ENCODE measurements at regions of chr7 and their contacts with region 1.

Region 1: DNA sequence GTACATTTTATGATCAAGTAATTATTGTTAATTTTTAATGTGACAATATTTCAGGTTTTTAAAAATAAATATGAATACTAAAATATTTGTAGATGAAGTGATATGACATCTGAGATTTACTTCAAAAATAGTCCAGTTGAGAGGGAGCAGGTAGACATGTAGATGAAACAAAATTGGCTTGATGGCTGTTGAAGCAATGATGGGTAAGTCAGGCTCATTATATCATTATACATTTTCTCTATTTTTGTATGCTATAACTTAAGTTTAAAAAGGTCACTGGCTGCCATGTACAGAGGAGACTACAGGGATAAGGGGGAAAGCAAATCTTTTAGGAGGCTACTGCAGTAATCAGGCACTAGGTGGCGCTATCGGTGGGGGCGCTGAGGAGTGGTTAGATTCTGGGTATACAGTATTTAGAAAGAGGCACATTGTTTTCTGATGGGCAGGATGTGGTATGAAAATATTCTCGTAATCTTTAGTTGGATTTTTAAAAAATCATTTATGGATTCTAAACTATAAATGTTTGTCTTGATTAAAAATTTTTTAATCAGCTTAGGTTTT is 189.8 kb upstream of the IMMP2L start:
- DNase-seq: peak; percentile 75
- H3K4me3 ChIP-seq: no peak overlapping the region
- H3K27ac ChIP-seq: no peak overlapping the region
- H3K4me1 ChIP-seq: peaks cover 10% of the 10 kb centered on the region
- H3K27me3 ChIP-seq: no peaks in the 10 kb centered on the region
- CTCF ChIP-seq: peak; percentile 94

Region 2: DNA sequence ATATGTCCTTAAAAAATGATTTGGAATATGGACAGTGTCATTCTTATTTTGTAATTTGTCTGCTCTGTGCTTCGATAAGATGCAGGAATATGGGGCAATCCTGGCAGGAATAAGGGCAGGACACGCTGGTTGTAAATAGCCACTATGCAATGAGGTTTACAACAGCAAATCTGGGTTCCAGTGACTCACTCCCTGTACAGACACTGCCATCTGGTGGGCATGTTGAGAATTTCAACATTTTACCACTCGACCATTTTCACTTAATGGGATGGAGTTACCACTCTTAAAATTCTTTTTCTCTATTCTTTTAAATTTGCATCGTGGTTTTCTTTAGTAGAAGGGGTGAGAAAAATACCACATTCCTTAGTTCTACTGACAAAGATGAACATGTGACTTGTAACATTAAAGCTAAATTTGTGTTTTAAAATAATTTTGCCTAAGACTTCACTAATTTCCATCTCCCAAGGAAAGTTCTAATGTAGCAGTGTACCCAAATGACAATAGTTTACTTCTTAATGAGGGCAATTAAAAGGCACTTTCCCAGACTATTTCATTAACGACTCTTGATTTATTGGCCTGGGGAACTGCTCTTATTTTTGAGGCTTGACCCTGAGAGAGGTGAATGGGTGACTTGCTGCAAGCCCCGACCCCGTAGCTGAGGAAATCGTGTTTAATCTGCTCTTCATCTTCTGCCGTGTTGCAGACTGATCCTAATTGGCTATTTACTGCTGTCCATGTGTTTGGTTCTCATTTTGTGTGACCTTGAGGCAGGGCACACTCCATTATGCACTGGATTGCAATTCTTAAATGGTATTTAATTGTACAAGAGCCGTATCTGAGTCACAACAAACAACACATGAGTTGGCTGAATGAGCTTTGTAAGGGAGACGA is 16.2 kb before region 1 on chr7:
- CTCF ChIA-PET with region 1: no interaction called
- POLR2A ChIA-PET with region 1: no interaction called
- intact Hi-C with region 1: no loop called
- DNase-seq: peak; percentile 81
- H3K4me3 ChIP-seq: no peak overlapping the region
- H3K27ac ChIP-seq: no peak overlapping the region
- H3K4me1 ChIP-seq: no peaks in the 10 kb centered on the region
- H3K27me3 ChIP-seq: no peaks in the 10 kb centered on the region
- CTCF ChIP-seq: peak; percentile 84

Region 3: DNA sequence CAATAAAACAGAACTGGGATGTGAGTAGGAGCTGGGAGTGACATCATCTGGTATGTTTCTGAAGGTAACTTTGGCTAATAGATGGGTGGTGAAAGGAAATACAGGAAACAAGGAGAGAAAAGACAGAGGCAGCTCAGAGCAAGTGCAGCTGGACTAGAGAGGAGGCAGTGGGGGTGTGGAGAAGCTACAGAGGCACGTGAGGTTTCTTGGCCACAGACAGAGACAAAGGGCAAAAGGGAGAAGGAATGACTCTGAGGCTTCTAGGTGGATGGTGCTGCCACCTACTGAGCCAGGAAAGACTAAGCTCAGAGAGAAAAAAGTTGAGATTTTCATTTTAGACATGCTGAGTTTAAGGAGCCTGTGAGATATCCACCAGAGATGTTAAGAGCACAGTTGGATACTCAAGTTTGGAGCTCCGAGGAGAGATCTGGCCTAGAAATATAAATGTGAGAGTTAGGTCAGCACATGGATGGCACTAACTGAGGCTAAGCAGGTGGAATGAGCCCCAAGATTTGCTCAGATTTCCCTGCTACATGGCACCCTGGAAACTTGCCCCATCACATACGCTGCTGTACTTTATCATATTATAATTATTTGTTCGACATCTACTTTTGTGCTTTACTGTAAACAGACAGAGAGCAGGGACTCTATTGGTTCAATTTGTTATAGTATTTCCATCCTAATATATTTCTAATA is 103.2 kb after region 1 on chr7:
- CTCF ChIA-PET with region 1: interaction called, 15 read pairs
- POLR2A ChIA-PET with region 1: no interaction called
- intact Hi-C with region 1: no loop called
- DNase-seq: peak; percentile 79
- H3K4me3 ChIP-seq: no peak overlapping the region
- H3K27ac ChIP-seq: no peak overlapping the region
- H3K4me1 ChIP-seq: peaks cover 2% of the 10 kb centered on the region
- H3K27me3 ChIP-seq: no peaks in the 10 kb centered on the region
- CTCF ChIP-seq: peak; percentile 74

Measured in A673 (cell line).